ENCODE measurements at regions of chr5 and their contacts with region 1.

Region 1: GRCh38 chr5:96662725-96663513 is 743 bp downstream of the CAST start:
- DNase-seq: peak; percentile 81
- ATAC-seq: peak; percentile 84
- H3K4me3 ChIP-seq: peak overlapping the region; percentile 82 to 87
- H3K27ac ChIP-seq: peak overlapping the region; percentile 96
- H3K4me1 ChIP-seq: peaks cover 11 to 39% of the 10 kb centered on the region in 2 experiments; a peak in 3 of 4 replicates
- H3K27me3 ChIP-seq: no peaks in the 10 kb centered on the region
- CTCF ChIP-seq: no peak
- POLR2A ChIP-seq: no peak
- RAD21 ChIP-seq: no peak

Region 2: DNA sequence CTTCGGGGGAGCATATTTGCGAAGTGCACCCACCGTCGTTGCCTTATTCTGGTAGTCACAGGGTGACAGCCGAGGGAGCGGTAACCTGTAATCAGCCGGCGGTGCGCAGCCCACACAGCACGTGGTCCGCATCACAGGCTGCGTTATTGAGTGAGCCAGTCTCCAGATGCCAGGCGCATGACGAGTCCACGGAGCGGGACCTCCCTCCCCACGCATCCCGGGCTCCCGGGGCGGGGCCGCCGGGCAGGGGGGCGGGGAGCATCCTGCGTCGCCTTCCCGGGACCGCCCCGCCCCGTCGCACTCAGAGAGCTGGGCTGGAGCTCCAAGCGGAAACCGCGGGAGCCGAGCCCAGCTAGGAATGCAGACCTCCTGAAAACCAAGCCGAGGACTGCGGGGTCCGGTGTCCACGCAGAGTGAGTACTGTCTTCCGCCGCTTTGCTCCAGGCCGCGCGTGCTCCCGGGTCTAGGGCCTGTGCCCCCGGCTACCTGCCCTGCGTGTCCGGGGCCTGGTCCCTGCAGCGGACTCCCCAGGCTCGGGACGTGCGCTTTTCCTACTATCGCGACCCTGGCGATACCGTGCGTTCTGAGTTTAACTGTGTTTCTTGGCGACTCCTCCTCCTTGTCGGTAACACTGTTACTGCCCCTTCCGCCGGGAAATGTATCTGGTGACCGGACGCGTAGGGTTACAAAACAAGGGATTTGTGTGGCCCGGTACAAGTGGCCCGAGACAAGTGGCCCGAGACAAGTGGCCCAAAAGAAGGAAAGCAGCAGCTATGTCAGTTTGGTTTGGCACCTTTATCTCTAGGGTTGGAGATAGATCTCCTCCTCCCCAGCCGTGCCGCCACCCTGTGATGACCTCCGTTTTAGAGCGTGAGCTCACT is 39.8 kb after region 1 on chr5:
- CTCF ChIA-PET with region 1: no interaction called
- POLR2A ChIA-PET with region 1: interaction called, 8 read pairs
- RAD21 ChIA-PET with region 1: no interaction called
- intact Hi-C with region 1: loop called (anchors 5 kb)
- DNase-seq: peak; percentile 86
- ATAC-seq: peak; percentile 87
- H3K4me3 ChIP-seq: peak overlapping the region; percentile 74 to 85
- H3K27ac ChIP-seq: peak overlapping the region; percentile 84
- H3K4me1 ChIP-seq: peaks cover 35 to 45% of the 10 kb centered on the region in 2 experiments
- H3K27me3 ChIP-seq: no peaks in the 10 kb centered on the region
- CTCF ChIP-seq: no peak
- POLR2A ChIP-seq: no peak
- RAD21 ChIP-seq: no peak